Left lung (tissue), 14 donors: ENCODE measurements at regions of chr9 and their contacts with region 1.

Region 1: DNA sequence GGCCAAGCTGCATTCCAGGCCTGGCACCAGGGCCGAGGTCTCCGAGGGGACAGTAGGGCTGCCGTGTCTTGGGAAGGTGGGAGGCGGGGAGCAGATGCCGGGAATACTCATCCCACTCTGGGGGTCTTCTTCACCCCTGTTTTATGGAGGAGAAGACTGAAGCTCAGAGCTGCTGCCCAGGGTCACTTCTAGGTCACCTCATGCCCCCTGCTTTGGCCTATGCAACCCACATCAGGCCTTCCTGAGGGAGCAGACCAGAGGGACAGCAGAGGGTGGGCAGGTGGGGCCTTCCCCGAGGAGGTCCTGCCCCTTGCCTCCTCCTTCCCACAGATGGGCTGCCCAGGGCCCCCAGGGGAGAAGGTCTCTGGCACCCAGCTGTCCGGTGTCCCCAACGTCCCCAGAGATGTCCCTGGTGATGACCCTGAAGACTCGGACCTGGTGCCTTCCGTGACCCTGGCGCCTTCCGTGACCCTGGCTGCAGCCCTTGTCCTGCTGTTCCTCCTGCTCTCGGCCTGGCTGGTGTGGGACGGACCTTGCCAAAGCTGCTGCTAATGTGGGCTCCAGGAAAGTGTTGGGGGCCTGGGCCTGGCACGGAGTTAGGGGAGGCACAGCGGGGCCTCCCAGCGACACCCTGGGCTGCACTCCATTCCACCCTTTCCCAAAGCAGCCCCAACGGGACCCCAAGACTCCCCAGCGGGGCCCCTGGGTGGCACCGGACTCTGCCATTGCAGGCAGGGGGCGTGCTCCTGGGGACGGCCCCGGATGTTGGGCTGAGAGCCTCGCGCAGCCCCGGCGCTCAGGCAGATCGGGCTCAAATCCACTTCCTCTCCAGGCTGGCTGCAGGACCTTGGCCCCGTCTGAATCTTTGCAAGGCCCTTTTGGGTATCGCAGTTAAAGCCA is 6.7 kb upstream of the SLC2A6 start:
- DNase-seq: peak in 1 of 4 donors; percentile 69
- ATAC-seq: peak; percentile 11
- H3K4me3 ChIP-seq: no peak overlapping the region
- H3K27ac ChIP-seq: no peak overlapping the region
- H3K4me1 ChIP-seq: peaks cover 0 to 7% of the 10 kb centered on the region in 2 donors
- H3K27me3 ChIP-seq: peaks cover 0 to 5% of the 10 kb centered on the region in 2 donors
- CTCF ChIP-seq: no peak

Region 2: GRCh38 chr9:133048569-133048968 is 437.0 kb before region 1 on chr9:
- intact Hi-C with region 1: no loop called
- DNase-seq: peak in 1 of 4 donors; percentile 54
- ATAC-seq: peak; percentile 65
- H3K4me3 ChIP-seq: no peak overlapping the region
- H3K27ac ChIP-seq: no peak overlapping the region
- H3K4me1 ChIP-seq: no peaks in the 10 kb centered on the region
- H3K27me3 ChIP-seq: no peaks in the 10 kb centered on the region
- CTCF ChIP-seq: no peak

Region 3: GRCh38 chr9:133184962-133185361 is 300.6 kb before region 1 on chr9:
- intact Hi-C with region 1: loop called in 1 of 2 experiments (anchors 10 kb)
- DNase-seq: peak in 2 of 4 donors; percentile 44 to 68
- ATAC-seq: peak; percentile 92
- H3K4me3 ChIP-seq: no peak overlapping the region
- H3K27ac ChIP-seq: no peak overlapping the region
- H3K4me1 ChIP-seq: peaks cover 0 to 5% of the 10 kb centered on the region in 2 donors
- H3K27me3 ChIP-seq: peaks cover 0 to 50% of the 10 kb centered on the region in 2 donors
- CTCF ChIP-seq: peak; percentile 48 to 55

Region 4: GRCh38 chr9:133406480-133407307 is 78.9 kb before region 1 on chr9:
- intact Hi-C with region 1: loop called in 1 of 2 experiments (anchors 10 kb)
- DNase-seq: peak; percentile 46 to 93 (median 72)
- ATAC-seq: peak; percentile 92
- H3K4me3 ChIP-seq: no peak overlapping the region
- H3K27ac ChIP-seq: no peak overlapping the region
- H3K4me1 ChIP-seq: no peaks in the 10 kb centered on the region
- H3K27me3 ChIP-seq: no peaks in the 10 kb centered on the region
- CTCF ChIP-seq: peak; percentile 83 to 94